ENCODE measurements at regions of chr3 and their contacts with region 1.

Region 1: GRCh38 chr3:107690522-107691138 is 167.9 kb downstream of the BBX start:
- DNase-seq: no peak
- H3K4me3 Mint-ChIP-seq: no peak overlapping the region
- H3K27ac Mint-ChIP-seq: no peak overlapping the region
- H3K4me1 Mint-ChIP-seq: peaks cover 7% of the 10 kb centered on the region
- H3K27me3 Mint-ChIP-seq: no peaks in the 10 kb centered on the region

Region 2: DNA sequence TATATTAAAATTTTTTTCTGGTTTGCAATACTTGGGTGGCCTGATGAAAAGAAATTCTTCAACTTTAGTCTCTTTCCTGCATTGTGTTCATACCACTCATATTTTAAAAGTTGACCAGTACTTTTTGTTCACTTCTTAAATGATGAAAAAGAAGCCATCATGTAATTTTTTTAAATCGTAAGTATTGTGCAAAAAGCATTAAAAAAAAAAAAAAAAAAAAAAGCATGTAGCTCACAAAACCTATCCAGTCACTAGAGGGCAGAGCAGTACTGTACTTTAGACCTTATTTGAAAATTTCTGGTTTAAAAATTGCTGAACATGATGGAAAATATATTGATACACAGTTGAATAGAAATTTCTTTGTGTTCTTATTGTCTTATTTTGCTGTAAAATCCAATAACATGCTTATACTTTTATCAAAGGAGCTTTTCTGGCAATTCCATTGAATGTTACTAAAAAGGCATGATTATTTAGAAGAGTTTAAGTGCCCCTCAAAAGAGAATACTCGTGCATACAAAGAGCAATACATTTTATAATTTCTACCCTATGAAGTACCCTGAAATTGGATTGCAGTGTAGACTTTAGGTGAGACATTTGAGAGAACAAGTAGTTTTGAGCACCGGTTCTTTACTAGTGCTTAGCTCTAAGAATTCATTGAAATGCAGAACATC is 30.2 kb before region 1 on chr3:
- CTCF ChIA-PET with region 1: interaction called, 18 read pairs
- POLR2A ChIA-PET with region 1: no interaction called
- intact Hi-C with region 1: no loop called
- DNase-seq: no peak
- H3K4me3 Mint-ChIP-seq: no peak overlapping the region
- H3K27ac Mint-ChIP-seq: no peak overlapping the region
- H3K4me1 Mint-ChIP-seq: peaks cover 23% of the 10 kb centered on the region
- H3K27me3 Mint-ChIP-seq: no peaks in the 10 kb centered on the region

Region 3: GRCh38 chr3:107704477-107704876 is 13.8 kb after region 1 on chr3:
- CTCF ChIA-PET with region 1: interaction called, 15 read pairs
- POLR2A ChIA-PET with region 1: interaction called, 3 read pairs
- intact Hi-C with region 1: no loop called
- DNase-seq: no peak
- H3K4me3 Mint-ChIP-seq: no peak overlapping the region
- H3K27ac Mint-ChIP-seq: no peak overlapping the region
- H3K4me1 Mint-ChIP-seq: peaks cover 30% of the 10 kb centered on the region
- H3K27me3 Mint-ChIP-seq: no peaks in the 10 kb centered on the region

Region 4: DNA sequence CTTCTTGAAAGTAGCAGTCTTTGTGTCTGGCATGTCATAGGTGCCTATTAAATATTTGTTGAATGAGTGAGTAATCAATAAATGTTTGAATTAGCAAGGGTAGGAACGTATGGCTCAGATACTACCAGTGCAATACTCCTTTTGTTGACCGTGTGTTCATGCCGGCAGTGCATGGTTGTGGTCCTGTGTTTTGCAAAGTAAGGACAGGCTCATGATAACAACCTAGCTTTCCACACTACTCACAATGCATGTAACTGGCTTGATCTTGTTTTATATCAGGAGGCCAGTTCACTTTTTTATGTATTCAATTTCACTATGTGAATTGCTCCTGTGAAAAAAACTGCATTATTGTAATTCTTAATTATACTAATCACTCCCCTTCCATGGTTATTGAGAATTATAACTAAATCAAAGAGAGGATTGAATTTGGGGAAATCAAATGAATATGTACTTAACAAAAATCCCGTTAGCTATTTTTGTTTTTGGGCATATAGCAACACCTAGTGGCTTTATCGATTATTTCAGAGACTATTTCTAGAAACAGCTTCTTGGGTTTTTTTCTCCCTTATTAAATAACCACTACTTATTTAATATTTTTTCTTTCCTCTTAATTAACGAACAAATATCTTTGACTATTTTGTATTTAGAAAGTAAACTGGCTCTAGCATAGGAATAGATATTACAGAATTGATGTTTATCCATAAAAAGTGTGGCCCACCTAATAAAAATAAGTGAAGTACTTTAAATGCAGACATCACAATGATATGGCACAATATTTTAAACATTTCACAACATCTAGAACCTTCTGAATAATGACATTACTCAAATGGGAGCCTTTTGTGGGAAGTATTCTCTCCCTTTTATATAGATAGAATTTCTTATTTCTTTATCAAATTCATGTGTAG is 50.6 kb after region 1 on chr3:
- CTCF ChIA-PET with region 1: interaction called, 8 read pairs
- POLR2A ChIA-PET with region 1: no interaction called
- intact Hi-C with region 1: loop called (anchors 1 kb)
- DNase-seq: no peak
- H3K4me3 Mint-ChIP-seq: no peak overlapping the region
- H3K27ac Mint-ChIP-seq: no peak overlapping the region
- H3K4me1 Mint-ChIP-seq: no peaks in the 10 kb centered on the region
- H3K27me3 Mint-ChIP-seq: no peaks in the 10 kb centered on the region

Region 5: GRCh38 chr3:107753480-107753879 is 62.9 kb after region 1 on chr3:
- CTCF ChIA-PET with region 1: interaction called, 4 read pairs
- POLR2A ChIA-PET with region 1: no interaction called
- intact Hi-C with region 1: loop called (anchors 2 kb)
- DNase-seq: peak; percentile 37
- H3K4me3 Mint-ChIP-seq: no peak overlapping the region
- H3K27ac Mint-ChIP-seq: no peak overlapping the region
- H3K4me1 Mint-ChIP-seq: no peaks in the 10 kb centered on the region
- H3K27me3 Mint-ChIP-seq: no peaks in the 10 kb centered on the region